ENCODE measurements at regions of chr11 and their contacts with region 1.

Region 1: DNA sequence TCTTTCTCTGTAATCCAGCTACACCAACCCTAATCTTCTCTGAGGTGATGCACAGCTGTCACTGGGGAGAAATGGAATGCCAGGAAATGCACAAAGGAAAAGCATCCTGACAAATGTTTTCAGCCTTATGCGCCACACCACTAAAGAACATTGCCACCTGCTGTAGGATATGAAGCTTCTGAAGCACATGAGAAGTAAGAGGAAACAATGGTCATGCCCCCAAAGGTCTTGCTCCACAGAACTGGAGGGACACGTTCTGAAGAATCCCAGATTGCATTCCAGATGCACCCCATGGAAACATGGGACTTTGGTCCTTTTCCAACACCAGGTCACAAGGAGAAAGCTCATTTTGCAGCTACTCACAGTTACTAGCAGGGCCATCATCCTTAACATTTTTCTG is 48.7 kb upstream of the ZBED5 start:
- DNase-seq: no peak
- ATAC-seq: peak; percentile 66 to 87 (median 84)
- H3K4me3 ChIP-seq: no peak overlapping the region
- H3K27ac ChIP-seq: peak overlapping the region; percentile 7
- H3K4me1 ChIP-seq: peaks cover 5% of the 10 kb centered on the region
- H3K27me3 ChIP-seq: no peaks in the 10 kb centered on the region
- CTCF ChIP-seq: peak; percentile 33

Region 2: DNA sequence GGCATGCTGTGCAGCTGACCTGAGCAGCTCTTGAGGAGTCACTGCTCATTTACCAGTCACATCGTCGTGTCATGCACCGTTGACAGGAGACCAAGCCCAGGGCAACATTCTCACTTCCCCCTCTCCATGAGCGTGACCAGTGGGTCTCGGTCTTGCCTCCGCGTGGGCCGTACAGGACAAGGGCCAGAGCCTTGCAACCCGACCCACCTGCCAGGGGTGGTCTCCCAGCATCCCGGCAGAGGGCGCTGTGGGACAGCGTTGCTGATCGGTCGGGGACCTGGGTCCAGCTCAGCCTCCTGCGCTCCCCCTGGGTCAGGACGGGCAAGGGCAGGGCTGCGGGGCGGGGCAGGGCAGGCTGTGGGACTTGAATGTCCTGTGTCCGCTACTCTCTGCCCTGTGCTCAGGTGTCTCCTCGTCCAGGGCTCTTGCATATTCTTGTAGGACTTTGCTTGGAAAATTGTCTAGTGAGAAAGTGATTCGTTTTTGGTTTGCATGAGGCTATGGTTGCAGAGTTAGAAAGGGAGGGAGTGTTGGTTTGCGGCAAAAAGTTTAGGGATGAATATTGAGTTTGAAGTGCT is 114.0 kb before region 1 on chr11:
- intact Hi-C with region 1: loop called (anchors 5 kb)
- DNase-seq: peak; percentile 91 to 95
- ATAC-seq: peak; percentile 90 to 94 (median 94)
- H3K4me3 ChIP-seq: peak overlapping the region; percentile 44
- H3K27ac ChIP-seq: no peak overlapping the region
- H3K4me1 ChIP-seq: peaks cover 5% of the 10 kb centered on the region
- H3K27me3 ChIP-seq: no peaks in the 10 kb centered on the region
- CTCF ChIP-seq: peak; percentile 86